GM12878 (cell line): ENCODE measurements at regions of chr2 and their contacts with region 1.

Region 1: GRCh38 chr2:148509288-148509902 is 135.2 kb upstream of the EPC2 start:
- DNase-seq: peak; percentile 59
- ATAC-seq: peak; percentile 100
- H3K4me3 ChIP-seq: no peak overlapping the region
- H3K27ac ChIP-seq: no peak overlapping the region
- H3K4me1 ChIP-seq: no peaks in the 10 kb centered on the region
- H3K27me3 ChIP-seq: no peaks in the 10 kb centered on the region
- CTCF ChIP-seq: peak; percentile 97 to 99 (median 99); a peak in 5 of 6 replicates
- EP300 ChIP-seq: no peak
- POLR2A ChIP-seq: no peak
- RAD21 ChIP-seq: peak; percentile 99

Region 2: DNA sequence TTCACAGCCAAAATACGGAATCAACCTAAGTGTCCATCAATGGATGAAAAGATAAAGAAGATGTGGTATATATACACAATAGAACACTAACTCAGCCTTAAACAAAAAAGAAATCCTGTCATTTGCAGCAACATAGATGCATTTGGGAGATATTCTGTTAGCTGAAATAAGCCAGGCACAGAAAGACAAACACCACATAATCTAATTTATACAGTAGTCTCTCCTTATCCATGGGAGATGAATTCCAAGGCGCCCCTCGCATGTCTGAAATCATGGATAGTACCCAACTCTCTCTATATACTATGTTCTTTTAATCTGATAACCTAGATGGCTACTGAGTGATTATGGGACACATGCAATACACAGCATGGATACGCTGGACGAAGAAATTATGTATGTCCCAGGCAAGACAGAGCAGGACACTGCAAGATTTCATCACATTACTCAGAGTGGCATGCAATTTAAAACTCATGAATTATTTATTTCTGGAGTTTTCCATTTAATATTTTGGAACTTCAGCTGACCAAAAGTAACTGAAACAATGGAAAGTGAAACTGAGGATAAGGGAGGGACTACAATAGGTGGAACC is 528.4 kb before region 1 on chr2:
- CTCF ChIA-PET with region 1: interaction called, 275 read pairs
- POLR2A ChIA-PET with region 1: no interaction called
- RAD21 ChIA-PET with region 1: interaction called, 7 read pairs
- SMC1A ChIA-PET with region 1: interaction called, 14 read pairs
- in situ Hi-C with region 1: no loop called
- intact Hi-C with region 1: no loop called
- DNase-seq: no peak
- ATAC-seq: no peak
- H3K4me3 ChIP-seq: no peak overlapping the region
- H3K27ac ChIP-seq: no peak overlapping the region
- H3K4me1 ChIP-seq: no peaks in the 10 kb centered on the region
- H3K27me3 ChIP-seq: no peaks in the 10 kb centered on the region
- CTCF ChIP-seq: no peak
- EP300 ChIP-seq: no peak
- POLR2A ChIP-seq: no peak
- RAD21 ChIP-seq: no peak

Region 3: DNA sequence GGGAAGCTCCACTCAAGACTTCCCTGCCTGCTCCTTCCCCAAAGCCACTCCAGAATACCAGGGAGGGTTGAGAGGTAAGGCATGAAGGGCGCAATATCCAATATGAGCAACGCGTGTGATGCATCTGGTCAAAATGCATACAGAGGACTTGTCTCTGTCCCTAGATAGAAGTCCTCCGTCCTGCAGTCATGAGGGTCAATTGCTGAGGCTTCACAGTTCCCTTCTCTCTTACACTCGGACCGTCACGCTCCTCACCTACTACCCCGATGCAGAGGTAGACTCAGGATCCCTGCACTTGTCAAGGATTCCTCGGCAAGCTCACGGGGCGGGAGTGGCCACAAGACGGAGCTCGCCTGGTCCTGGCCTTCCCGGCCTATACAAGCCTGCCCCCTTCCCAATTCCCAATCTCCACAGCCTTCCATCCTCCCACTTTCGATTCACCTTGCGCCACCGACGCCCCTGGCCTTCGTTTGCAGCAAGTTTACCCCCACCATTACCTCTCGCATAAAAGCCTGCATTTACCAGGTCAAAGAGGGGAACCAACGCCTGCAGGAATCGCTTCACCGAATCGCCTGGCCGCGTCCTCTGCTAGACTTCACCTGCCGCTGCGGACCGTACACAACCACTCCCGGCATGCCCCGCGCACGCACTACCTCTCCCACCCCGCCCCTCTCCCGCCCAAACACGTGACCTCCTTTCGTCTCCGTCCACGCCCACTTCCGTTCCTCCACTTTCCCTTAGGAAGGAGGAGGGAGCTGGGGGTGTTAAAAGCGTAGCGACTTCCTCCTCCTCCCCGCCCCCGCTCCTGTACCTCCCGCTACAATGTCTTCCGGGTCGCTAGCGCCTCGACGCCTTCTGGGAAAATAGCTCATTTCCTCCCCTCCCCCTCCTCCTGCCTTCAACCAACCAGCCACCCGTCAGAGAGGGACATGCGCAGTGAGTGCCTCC is 489.0 kb before region 1 on chr2 and contains the start of gene ORC4:
- CTCF ChIA-PET with region 1: interaction called, 6 read pairs
- POLR2A ChIA-PET with region 1: interaction called, 3 read pairs
- RAD21 ChIA-PET with region 1: interaction called, 12 read pairs
- SMC1A ChIA-PET with region 1: interaction called, 12 read pairs
- in situ Hi-C with region 1: no loop called
- intact Hi-C with region 1: no loop called
- DNase-seq: peak; percentile 99
- ATAC-seq: peak; percentile 81
- H3K4me3 ChIP-seq: peak within 1 kb of the TSS; percentile 99
- H3K27ac ChIP-seq: peak within 1 kb of the TSS; percentile 96
- H3K4me1 ChIP-seq: no peaks in the 10 kb centered on the region
- H3K27me3 ChIP-seq: no peaks in the 10 kb centered on the region
- CTCF ChIP-seq: peak in 2 of 3 experiments; percentile 19 to 26; a peak in 2 of 6 replicates
- EP300 ChIP-seq: no peak; a peak in 1 of 4 replicates
- POLR2A ChIP-seq: peak; percentile 90
- RAD21 ChIP-seq: peak; percentile 19; the same call in 1 of the 2 replicates
- polyA plus RNA-seq, gene ORC4: 31.3 to 71.3 TPM

Region 4: GRCh38 chr2:148459377-148459778 is 50.0 kb before region 1 on chr2:
- CTCF ChIA-PET with region 1: interaction called, 10 read pairs
- POLR2A ChIA-PET with region 1: no interaction called
- RAD21 ChIA-PET with region 1: interaction called, 5 read pairs
- SMC1A ChIA-PET with region 1: interaction called, 5 read pairs
- in situ Hi-C with region 1: no loop called
- intact Hi-C with region 1: no loop called
- DNase-seq: no peak
- ATAC-seq: no peak
- H3K4me3 ChIP-seq: no peak overlapping the region
- H3K27ac ChIP-seq: no peak overlapping the region
- H3K4me1 ChIP-seq: no peaks in the 10 kb centered on the region
- H3K27me3 ChIP-seq: no peaks in the 10 kb centered on the region
- CTCF ChIP-seq: no peak
- EP300 ChIP-seq: no peak
- POLR2A ChIP-seq: no peak
- RAD21 ChIP-seq: no peak

Region 5: GRCh38 chr2:148493822-148494563 is 15.4 kb before region 1 on chr2:
- CTCF ChIA-PET with region 1: interaction called, 38 read pairs
- POLR2A ChIA-PET with region 1: no interaction called
- RAD21 ChIA-PET with region 1: interaction called, 15 read pairs
- SMC1A ChIA-PET with region 1: interaction called, 39 read pairs
- in situ Hi-C with region 1: no loop called
- intact Hi-C with region 1: no loop called
- DNase-seq: no peak
- ATAC-seq: peak; percentile 70
- H3K4me3 ChIP-seq: no peak overlapping the region
- H3K27ac ChIP-seq: no peak overlapping the region; the same call in 1 of the 2 replicates
- H3K4me1 ChIP-seq: peaks cover 2% of the 10 kb centered on the region; the same call in 1 of the 2 replicates
- H3K27me3 ChIP-seq: no peaks in the 10 kb centered on the region
- CTCF ChIP-seq: no peak
- EP300 ChIP-seq: no peak
- POLR2A ChIP-seq: no peak
- RAD21 ChIP-seq: no peak

Region 6: GRCh38 chr2:149200109-149200520 is 690.7 kb after region 1 on chr2:
- CTCF ChIA-PET with region 1: no interaction called
- POLR2A ChIA-PET with region 1: no interaction called
- RAD21 ChIA-PET with region 1: no interaction called
- SMC1A ChIA-PET with region 1: no interaction called
- in situ Hi-C with region 1: no loop called
- intact Hi-C with region 1: no loop called
- DNase-seq: no peak
- ATAC-seq: no peak
- H3K4me3 ChIP-seq: no peak overlapping the region
- H3K27ac ChIP-seq: no peak overlapping the region
- H3K4me1 ChIP-seq: no peaks in the 10 kb centered on the region
- H3K27me3 ChIP-seq: no peaks in the 10 kb centered on the region
- CTCF ChIP-seq: no peak
- EP300 ChIP-seq: no peak
- POLR2A ChIP-seq: no peak
- RAD21 ChIP-seq: no peak